K562 (cell line): ENCODE measurements at regions of chr21 and their contacts with region 1.

Region 1: GRCh38 chr21:29477941-29478340 is 179.2 kb downstream of the BACH1 start:
- DNase-seq: peak in 1 of 4 experiments; percentile 28
- ATAC-seq: no peak
- H3K4me3 ChIP-seq: no peak overlapping the region
- H3K27ac ChIP-seq: no peak overlapping the region
- H3K4me1 ChIP-seq: peaks cover 0 to 8% of the 10 kb centered on the region in 2 experiments; a peak in 3 of 5 replicates
- H3K27me3 ChIP-seq: no peaks in the 10 kb centered on the region
- CTCF ChIP-seq: no peak
- EP300 ChIP-seq: no peak
- POLR2A ChIP-seq: no peak
- RAD21 ChIP-seq: no peak

Region 2: GRCh38 chr21:29085106-29085752 is 392.7 kb before region 1 on chr21:
- CTCF ChIA-PET with region 1: no interaction called
- POLR2A ChIA-PET with region 1: no interaction called
- in situ Hi-C with region 1: no loop called
- intact Hi-C with region 1: loop called (anchors 5 kb)
- DNase-seq: no peak
- ATAC-seq: peak; percentile 20; the same call in 1 of the 3 replicates
- H3K4me3 ChIP-seq: no peak overlapping the region
- H3K27ac ChIP-seq: no peak overlapping the region
- H3K4me1 ChIP-seq: peaks cover 0 to 3% of the 10 kb centered on the region in 2 experiments; a peak in 2 of 5 replicates
- H3K27me3 ChIP-seq: peaks cover 4 to 10% of the 10 kb centered on the region in 2 experiments; a peak in 4 of 5 replicates
- CTCF ChIP-seq: no peak
- EP300 ChIP-seq: no peak
- POLR2A ChIP-seq: no peak
- RAD21 ChIP-seq: no peak

Region 3: GRCh38 chr21:29175408-29176134 is 302.4 kb before region 1 on chr21:
- CTCF ChIA-PET with region 1: no interaction called
- POLR2A ChIA-PET with region 1: no interaction called
- in situ Hi-C with region 1: no loop called
- intact Hi-C with region 1: no loop called
- DNase-seq: no peak
- ATAC-seq: no peak
- H3K4me3 ChIP-seq: no peak overlapping the region
- H3K27ac ChIP-seq: no peak overlapping the region
- H3K4me1 ChIP-seq: no peaks in the 10 kb centered on the region
- H3K27me3 ChIP-seq: peaks cover 12 to 25% of the 10 kb centered on the region in 2 experiments
- CTCF ChIP-seq: no peak
- EP300 ChIP-seq: no peak
- POLR2A ChIP-seq: no peak
- RAD21 ChIP-seq: no peak

Region 4: GRCh38 chr21:29462479-29462878 is 15.5 kb before region 1 on chr21:
- CTCF ChIA-PET with region 1: no interaction called
- POLR2A ChIA-PET with region 1: no interaction called
- in situ Hi-C with region 1: no loop called
- intact Hi-C with region 1: no loop called
- DNase-seq: no peak
- ATAC-seq: no peak; the same call in 2 of the 3 replicates
- H3K4me3 ChIP-seq: no peak overlapping the region
- H3K27ac ChIP-seq: no peak overlapping the region
- H3K4me1 ChIP-seq: no peaks in the 10 kb centered on the region
- H3K27me3 ChIP-seq: no peaks in the 10 kb centered on the region
- CTCF ChIP-seq: no peak
- EP300 ChIP-seq: no peak
- POLR2A ChIP-seq: no peak
- RAD21 ChIP-seq: no peak

Region 5: DNA sequence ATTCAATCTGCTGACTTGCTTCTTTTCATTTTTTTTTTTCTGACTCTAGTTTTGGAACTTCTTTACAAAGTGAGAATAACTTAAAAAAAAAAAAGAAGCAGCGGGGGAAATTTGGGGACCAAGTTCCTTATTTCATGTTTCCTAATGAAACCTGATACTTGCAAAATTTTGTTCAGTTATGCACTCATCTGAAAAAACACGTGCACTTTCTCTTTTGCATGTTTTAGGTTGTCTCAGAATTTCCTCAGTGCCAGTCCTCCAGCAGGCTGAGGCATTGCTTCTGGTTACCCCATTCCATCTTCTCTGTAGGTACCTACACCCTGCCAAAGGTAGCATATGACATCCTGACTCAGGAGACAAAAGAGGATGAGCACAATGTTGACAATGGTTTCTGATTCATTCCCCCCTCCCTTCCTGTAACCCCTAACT is 162.2 kb after region 1 on chr21:
- CTCF ChIA-PET with region 1: no interaction called
- POLR2A ChIA-PET with region 1: no interaction called
- in situ Hi-C with region 1: no loop called
- intact Hi-C with region 1: loop called (anchors 5 kb)
- DNase-seq: no peak
- ATAC-seq: no peak
- H3K4me3 ChIP-seq: no peak overlapping the region
- H3K27ac ChIP-seq: peak overlapping the region; percentile 98
- H3K4me1 ChIP-seq: peaks cover 19 to 81% of the 10 kb centered on the region in 2 experiments
- H3K27me3 ChIP-seq: no peaks in the 10 kb centered on the region
- CTCF ChIP-seq: no peak
- EP300 ChIP-seq: no peak
- POLR2A ChIP-seq: no peak
- RAD21 ChIP-seq: no peak

Region 6: DNA sequence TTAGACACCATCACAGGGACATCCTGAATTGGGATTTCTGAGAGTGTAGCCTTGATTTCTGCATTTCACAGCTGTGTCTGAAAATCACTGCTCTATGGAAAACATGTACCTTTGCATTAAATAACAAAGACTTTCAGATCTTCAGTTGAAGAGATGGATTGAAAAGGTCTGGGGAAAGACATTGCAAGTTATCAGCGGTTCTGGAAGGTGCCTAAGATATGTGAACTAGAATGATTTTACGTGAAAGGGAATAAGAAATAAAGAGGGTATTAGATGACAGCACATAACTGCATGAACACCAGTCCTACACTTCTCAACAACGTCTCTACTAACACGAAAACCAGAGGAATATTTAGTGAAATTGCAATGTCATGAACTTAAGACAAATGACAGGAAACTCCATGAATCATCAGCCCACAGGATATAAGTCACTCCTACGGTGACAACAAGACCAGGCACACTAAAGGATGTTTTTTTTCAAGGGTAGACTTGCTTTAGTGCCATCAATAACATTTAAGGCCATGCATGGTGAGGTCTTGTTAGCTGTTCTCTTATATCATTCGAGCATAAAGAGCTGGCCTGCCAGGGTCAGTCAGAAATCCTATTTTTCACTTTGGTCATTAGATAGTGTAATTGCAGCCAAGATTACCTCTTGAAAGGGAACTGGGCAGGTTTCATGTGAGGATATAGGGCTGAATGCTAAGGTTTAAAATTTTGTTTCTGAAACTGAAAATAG is 178.7 kb after region 1 on chr21:
- CTCF ChIA-PET with region 1: no interaction called
- POLR2A ChIA-PET with region 1: no interaction called
- in situ Hi-C with region 1: no loop called
- intact Hi-C with region 1: loop called (anchors 5 kb)
- DNase-seq: peak; percentile 62 to 95 (median 75)
- ATAC-seq: peak; percentile 89
- H3K4me3 ChIP-seq: no peak overlapping the region
- H3K27ac ChIP-seq: peak overlapping the region; percentile 98
- H3K4me1 ChIP-seq: peaks cover 8 to 68% of the 10 kb centered on the region in 2 experiments
- H3K27me3 ChIP-seq: no peaks in the 10 kb centered on the region
- CTCF ChIP-seq: 0 out of 6 replicates have a peak, but pooled peaks of 1 of the 3 experiments have one; percentile 1
- EP300 ChIP-seq: peak; percentile 99
- POLR2A ChIP-seq: peak; percentile 75
- RAD21 ChIP-seq: peak; percentile 31 to 51

Region 7: GRCh38 chr21:29786496-29787360 is 308.8 kb after region 1 on chr21:
- CTCF ChIA-PET with region 1: no interaction called
- POLR2A ChIA-PET with region 1: no interaction called
- in situ Hi-C with region 1: no loop called
- intact Hi-C with region 1: loop called (anchors 10 kb)
- DNase-seq: no peak
- ATAC-seq: no peak
- H3K4me3 ChIP-seq: no peak overlapping the region
- H3K27ac ChIP-seq: no peak overlapping the region
- H3K4me1 ChIP-seq: peaks cover 0 to 3% of the 10 kb centered on the region in 2 experiments; a peak in 3 of 5 replicates
- H3K27me3 ChIP-seq: no peaks in the 10 kb centered on the region
- CTCF ChIP-seq: no peak
- EP300 ChIP-seq: no peak
- POLR2A ChIP-seq: no peak
- RAD21 ChIP-seq: no peak